ENCODE measurements at regions of chr3 and their contacts with region 1.

Region 1: DNA sequence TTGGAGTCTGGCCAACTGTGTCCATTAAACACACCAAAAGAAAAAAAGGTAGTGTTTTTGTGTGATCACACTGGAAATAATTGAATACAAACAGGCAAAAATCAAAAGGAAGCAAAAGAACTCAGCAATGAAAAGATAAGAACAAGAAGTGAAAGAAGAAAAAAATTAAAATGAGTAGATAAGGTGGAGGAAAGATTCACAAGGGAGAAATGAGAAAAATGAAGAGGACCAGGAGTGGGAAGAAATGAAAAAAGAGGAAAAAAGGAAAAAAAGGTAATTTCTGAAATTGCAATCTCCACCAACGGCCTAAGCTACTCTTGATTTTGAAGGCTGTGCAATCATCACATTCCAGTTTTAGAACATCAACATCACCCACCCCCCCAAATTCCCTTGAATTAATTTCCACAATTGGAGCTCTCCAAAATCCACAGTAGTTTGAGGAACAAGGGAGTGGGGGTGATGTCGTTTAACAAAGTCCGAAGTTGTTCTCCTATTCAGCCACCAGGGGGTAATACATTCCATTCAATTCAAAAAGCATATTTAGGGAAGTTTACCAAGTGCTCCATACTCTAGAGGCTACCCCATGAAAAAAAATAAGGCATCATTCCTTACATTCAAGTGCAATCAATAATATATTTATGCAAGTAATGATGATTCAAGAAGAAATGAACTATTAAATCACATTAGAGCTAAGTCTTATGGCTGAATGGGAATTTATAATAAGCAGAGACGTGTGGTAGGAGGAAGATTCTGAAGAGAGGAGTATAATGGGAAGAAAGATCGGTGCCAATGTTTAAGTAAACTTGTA is 37.4 kb downstream of the ZNF860 start:
- DNase-seq: no peak
- H3K4me3 Mint-ChIP-seq: no peak overlapping the region
- H3K27ac Mint-ChIP-seq: no peak overlapping the region
- H3K4me1 Mint-ChIP-seq: no peaks in the 10 kb centered on the region
- H3K27me3 Mint-ChIP-seq: peaks cover 2% of the 10 kb centered on the region

Region 2: GRCh38 chr3:31974471-31974870 is 44.5 kb before region 1 on chr3:
- CTCF ChIA-PET with region 1: no interaction called
- intact Hi-C with region 1: no loop called
- DNase-seq: no peak
- H3K4me3 Mint-ChIP-seq: no peak overlapping the region
- H3K27ac Mint-ChIP-seq: no peak overlapping the region
- H3K4me1 Mint-ChIP-seq: peaks cover 18% of the 10 kb centered on the region
- H3K27me3 Mint-ChIP-seq: peaks cover 42% of the 10 kb centered on the region

Region 3: GRCh38 chr3:32340039-32340438 is 321.1 kb after region 1 on chr3:
- CTCF ChIA-PET with region 1: no interaction called
- intact Hi-C with region 1: loop called (anchors 10 kb)
- DNase-seq: peak; percentile 28
- H3K4me3 Mint-ChIP-seq: no peak overlapping the region
- H3K27ac Mint-ChIP-seq: no peak overlapping the region
- H3K4me1 Mint-ChIP-seq: peaks cover 20% of the 10 kb centered on the region
- H3K27me3 Mint-ChIP-seq: no peaks in the 10 kb centered on the region